BJ (cell line): ENCODE measurements at regions of chr1 and their contacts with region 1.

Region 1: DNA sequence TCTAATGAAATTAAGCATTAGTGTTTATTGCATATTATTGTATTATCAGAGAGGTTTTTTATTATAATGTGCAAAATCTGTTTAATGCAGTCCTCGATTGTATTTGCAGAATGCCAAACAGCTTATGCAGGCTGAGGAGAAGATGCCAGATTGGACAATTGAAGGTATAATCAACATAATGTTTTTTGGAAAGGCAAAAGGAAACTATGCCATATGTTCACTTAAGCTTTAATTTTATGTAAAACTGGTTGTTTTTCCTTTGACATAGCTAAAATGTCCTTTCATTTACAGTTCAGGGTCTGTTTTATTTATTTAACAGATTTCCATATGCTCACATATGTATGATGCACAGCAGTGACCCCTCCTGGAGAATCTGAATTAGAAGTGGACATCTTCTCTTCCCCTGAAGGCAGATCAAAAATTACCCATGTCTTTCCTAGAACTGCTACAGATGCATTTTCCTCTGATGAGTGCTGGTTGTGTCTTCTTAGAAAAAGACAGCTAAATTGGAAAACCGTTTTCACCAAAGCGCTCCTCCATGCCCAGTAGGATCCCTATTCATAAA is 143.5 kb upstream of the USH2A start:
- DNase-seq: no peak
- H3K4me3 ChIP-seq: no peak overlapping the region
- H3K27me3 ChIP-seq: peaks cover 1% of the 10 kb centered on the region; the same call in 1 of the 2 replicates
- CTCF ChIP-seq: peak; percentile 51

Region 2: DNA sequence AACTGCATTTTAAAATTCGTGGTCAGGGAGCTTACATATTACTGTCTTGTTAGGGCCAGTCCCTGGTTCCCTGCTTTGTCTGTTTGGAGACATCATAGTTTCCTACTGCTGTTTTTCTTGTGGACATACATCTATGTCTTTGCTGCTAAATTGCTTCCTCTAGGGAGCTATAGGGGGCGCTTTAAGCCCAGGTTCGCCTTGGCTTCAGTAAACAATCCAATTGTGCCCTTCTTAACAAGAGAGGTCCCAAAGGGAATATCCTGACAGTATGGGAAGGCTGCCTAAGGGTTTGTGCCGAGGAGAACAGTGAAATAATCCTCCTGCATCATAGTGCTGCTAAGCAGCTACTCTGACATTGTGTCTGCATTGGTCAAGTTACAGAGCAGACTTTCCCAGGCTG is 255.9 kb before region 1 on chr1:
- CTCF ChIA-PET with region 1: interaction called, 72 read pairs
- POLR2A ChIA-PET with region 1: no interaction called
- DNase-seq: no peak
- H3K4me3 ChIP-seq: no peak overlapping the region
- H3K27me3 ChIP-seq: no peaks in the 10 kb centered on the region
- CTCF ChIP-seq: peak; percentile 75

Region 3: DNA sequence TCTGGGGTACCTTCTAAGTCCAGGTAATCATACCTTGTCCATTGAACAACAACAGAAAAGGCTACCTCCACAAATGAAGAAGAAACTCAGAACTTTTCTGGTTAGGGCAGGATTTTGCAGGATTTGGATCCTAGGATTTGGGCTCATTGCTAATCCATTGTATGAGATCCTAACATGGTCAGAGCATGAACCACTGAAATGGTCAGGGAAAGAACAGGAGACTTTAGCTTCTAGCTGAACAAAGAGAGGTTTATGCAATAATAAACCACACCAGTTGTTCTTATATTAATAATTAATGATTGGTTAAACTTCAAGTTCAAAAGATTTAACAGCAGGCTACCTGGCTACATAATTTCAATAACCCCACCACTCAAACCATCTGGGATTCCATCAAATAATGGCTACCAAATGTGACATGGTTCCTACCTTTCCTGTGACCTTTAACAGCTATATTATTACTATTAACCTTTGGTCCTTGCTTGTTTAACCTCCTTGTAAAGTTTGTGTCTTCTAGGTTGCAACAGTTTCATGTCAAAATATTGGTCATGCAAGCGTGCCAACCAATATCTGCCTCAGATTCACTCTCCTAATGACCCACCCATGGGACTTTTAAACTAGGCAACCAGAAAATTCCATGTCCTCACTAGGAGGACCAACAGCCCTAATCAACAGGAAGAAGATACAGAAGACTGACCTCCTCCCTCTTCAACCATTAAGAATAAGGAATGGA is 82.9 kb before region 1 on chr1:
- CTCF ChIA-PET with region 1: no interaction called
- POLR2A ChIA-PET with region 1: no interaction called
- DNase-seq: no peak
- H3K4me3 ChIP-seq: no peak overlapping the region
- H3K27me3 ChIP-seq: no peaks in the 10 kb centered on the region
- CTCF ChIP-seq: no peak

Region 4: GRCh38 chr1:216554934-216555333 is 11.8 kb before region 1 on chr1:
- CTCF ChIA-PET with region 1: interaction called, 17 read pairs
- POLR2A ChIA-PET with region 1: no interaction called
- DNase-seq: no peak
- H3K4me3 ChIP-seq: no peak overlapping the region
- H3K27me3 ChIP-seq: no peaks in the 10 kb centered on the region
- CTCF ChIP-seq: no peak

Region 5: DNA sequence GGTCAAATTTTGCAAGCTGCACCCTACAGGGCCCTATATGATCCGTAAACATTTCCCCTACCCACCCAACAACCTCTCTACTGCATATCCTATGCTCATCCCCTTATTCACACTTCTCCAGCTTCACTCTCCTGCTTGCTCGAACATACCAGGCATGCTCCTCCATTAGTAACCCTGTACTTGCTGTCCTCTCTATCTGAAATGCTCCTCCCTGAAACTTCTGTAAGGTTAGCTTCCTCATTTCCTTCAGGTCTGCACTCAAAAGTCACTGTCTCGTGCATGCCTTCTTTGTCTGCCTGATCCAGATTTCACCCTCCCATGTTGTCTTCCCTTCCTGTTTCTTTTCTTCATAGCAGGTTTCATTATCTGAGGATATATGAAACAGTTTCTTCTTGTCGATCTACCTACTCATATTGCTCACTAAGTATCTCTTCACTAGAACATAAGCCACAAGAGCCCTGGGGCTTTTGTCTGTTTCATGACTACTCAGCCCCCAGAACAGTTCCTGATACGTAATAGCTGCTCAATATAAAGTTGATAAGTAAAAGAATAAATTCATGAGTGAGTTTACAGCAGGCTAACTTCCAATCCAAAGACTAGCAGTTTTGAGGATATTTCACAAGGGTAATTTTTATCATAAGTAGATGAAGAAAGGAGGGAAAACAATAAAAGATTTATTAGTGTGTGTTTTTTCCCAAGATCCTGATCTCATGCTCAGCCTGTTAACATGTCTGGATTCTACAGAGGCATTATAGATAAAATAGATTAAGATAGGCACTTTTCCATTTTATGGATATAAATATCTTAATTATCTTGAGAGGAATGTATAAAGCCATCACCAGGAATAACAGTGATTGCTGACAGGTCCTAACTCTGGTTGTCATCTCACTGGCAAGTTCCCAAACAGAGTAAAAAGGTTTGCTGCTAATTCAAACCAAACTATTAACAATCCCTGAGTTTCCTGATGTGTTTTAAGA is 549.0 kb after region 1 on chr1:
- CTCF ChIA-PET with region 1: no interaction called
- POLR2A ChIA-PET with region 1: no interaction called
- DNase-seq: no peak
- H3K4me3 ChIP-seq: no peak overlapping the region
- H3K27me3 ChIP-seq: no peaks in the 10 kb centered on the region
- CTCF ChIP-seq: no peak